Activated CD4-positive, alpha-beta T cell treated with anti-CD3 and anti-CD28 coated beads, Interleukin-2, amount 10 ng/mL, durations not matched to agents 24 days and 14 days (primary cell): ENCODE measurements at regions of chr14 and their contacts with region 1.

Region 1: GRCh38 chr14:68718023-68718995 is 74.6 kb downstream of the ZFP36L1 start:
- DNase-seq: no peak
- H3K4me3 Mint-ChIP-seq: no peak overlapping the region
- H3K27ac Mint-ChIP-seq: no peak overlapping the region
- H3K4me1 Mint-ChIP-seq: peaks cover 46% of the 10 kb centered on the region
- H3K27me3 Mint-ChIP-seq: peaks cover 2% of the 10 kb centered on the region

Region 2: GRCh38 chr14:68181519-68182326 is 536.6 kb before region 1 on chr14:
- intact Hi-C with region 1: no loop called
- DNase-seq: no peak
- H3K4me3 Mint-ChIP-seq: no peak overlapping the region
- H3K27ac Mint-ChIP-seq: peak overlapping the region; percentile 15
- H3K4me1 Mint-ChIP-seq: peaks cover 29% of the 10 kb centered on the region
- H3K27me3 Mint-ChIP-seq: peaks cover 3% of the 10 kb centered on the region

Region 3: DNA sequence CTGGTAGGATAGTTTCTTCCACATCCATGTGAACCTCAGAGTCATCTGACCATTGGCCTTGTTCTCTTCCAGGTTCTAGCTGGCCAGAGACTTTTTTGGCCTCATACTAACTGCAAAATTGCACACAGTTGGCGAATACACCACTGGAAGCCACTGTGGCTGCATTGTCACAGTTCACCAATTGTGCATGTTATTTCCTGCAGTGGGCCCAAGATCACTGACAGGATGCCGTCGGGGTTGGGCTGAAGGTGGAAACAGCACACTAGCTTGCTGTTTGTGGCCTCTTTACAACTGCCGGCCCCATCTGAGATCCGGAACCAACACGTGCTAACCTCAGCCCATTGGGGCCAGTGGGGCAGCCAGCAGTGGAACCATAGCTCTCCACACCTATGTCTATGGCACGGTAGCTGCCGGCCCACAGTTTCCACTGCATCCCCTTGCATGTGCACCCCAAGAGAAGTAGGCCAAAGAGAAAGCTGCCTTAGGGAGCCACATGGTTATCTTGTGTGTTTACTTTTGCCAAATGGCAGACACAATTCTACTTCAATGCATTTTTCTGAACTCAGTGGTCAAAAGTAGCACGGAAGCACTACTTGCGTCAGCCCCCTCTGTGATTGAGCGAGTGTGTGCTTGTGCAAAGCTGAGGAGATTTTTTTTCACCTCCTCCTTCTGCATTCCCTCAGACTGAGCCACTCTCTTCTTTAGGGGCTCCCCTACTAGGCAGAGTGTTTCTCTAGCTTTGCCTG is 434.8 kb before region 1 on chr14:
- intact Hi-C with region 1: loop called (anchors 5 kb)
- DNase-seq: peak; percentile 88
- H3K4me3 Mint-ChIP-seq: peak overlapping the region; percentile 62
- H3K27ac Mint-ChIP-seq: peak overlapping the region; percentile 83
- H3K4me1 Mint-ChIP-seq: peaks cover 57% of the 10 kb centered on the region
- H3K27me3 Mint-ChIP-seq: no peaks in the 10 kb centered on the region

Region 4: DNA sequence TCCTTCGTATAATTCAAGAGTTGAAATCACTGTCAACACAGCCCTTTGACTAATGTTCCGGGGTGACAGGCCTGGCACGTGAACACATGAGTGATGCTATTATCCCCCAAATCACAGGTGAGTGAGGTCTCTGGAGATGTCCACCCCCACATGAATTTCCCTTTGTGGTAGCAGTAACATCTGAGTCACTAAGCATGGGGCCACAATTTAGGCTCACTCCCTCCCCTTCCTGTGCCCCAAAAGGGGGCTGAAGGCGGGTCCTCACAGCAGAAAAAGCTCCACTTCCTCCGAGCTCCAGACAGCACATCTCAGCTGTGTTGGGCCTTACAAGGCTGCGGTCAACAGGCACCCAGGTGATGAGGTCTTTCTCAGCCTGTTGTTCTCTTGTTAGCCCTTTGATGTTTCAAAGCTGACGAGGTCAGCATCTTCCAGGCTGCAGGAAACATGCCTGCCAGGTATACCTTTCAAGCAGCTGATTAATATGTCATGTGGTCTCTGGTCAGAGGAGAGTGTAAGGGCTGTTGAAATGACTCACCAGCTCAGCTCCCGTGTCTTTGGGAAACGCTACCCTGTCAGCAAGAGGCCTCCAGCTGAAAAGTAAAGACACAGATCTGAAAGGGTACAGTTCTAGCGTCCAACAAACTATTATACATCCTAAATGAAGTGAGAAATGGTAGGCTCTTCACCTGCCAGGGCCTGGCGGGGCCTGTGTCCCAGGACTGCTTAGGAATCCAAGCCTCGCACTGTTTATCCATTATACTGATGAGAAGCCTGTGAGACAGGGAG is 32.7 kb before region 1 on chr14:
- intact Hi-C with region 1: loop called (anchors 2 kb)
- DNase-seq: peak; percentile 92
- H3K4me3 Mint-ChIP-seq: peak overlapping the region; percentile 61
- H3K27ac Mint-ChIP-seq: peak overlapping the region; percentile 91
- H3K4me1 Mint-ChIP-seq: peaks cover 56% of the 10 kb centered on the region
- H3K27me3 Mint-ChIP-seq: no peaks in the 10 kb centered on the region

Region 5: DNA sequence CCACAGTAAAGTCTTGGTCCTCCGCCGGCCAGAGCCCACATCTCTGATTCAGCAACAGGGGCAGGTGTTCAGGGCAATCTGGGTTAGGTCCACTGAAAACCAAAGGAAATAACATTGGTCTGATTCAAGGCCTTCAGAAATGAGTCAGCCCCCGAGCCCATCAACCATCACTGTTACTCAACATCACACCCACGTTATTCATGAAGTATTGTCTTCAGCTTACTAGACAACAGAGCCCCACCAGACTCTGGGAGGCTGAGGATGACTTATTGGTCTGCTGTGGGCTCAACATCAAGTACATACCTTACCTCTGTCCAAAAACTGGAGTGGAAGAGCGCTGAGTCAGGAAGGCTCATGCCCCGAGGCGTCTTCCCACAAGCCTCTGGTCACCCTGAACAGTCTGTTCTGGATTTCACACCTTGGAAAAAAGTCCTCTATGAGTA is 23.0 kb before region 1 on chr14:
- intact Hi-C with region 1: loop called (anchors 2 kb)
- DNase-seq: no peak
- H3K4me3 Mint-ChIP-seq: peak overlapping the region; percentile 18
- H3K27ac Mint-ChIP-seq: peak overlapping the region; percentile 72
- H3K4me1 Mint-ChIP-seq: peaks cover 20% of the 10 kb centered on the region
- H3K27me3 Mint-ChIP-seq: peaks cover 7% of the 10 kb centered on the region

Region 6: DNA sequence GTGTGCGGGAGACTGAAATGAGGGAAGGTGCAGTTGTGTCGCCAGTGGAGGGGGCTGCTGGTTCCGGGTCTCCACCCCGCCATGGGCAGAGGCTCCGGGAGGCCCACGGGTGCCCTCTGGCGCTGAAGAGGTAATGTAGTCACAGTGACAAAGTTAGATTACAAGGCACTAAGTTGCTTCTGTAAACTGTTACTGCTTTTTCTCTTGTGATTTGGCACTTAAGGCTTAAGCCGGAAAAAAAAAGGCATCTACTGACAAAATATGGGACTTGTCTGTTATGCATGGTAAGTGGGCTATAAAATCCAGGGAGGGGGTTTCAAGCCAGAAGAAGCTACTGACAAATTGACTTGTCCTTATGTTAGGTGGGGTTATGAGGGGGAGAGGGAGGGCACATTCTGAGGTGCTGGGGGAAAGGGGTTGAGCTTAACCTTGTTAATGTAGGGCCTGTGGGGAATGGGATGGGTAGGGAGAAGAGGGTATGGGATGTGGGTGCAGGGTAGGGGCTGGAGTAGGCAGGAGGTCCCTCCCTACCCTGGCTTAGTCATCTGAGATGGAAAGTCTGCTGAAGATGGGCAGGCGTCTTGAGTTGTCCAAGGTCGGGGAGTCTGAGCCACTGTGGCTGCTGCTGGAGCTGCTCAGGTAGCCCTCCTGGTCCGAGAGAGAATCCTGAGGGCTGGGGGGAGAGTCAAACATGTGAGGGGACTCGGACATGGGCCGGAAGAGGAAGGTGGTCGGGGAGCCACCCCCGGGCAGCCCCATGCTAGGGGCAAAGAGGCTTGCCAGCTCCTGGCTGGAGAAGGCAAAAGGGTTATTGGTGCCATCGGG is 70.9 kb after region 1 on chr14:
- intact Hi-C with region 1: loop called (anchors 1 kb)
- DNase-seq: peak; percentile 95
- H3K4me3 Mint-ChIP-seq: peak overlapping the region; percentile 93
- H3K27ac Mint-ChIP-seq: peak overlapping the region; percentile 100
- H3K4me1 Mint-ChIP-seq: peaks cover 68% of the 10 kb centered on the region
- H3K27me3 Mint-ChIP-seq: no peaks in the 10 kb centered on the region

Region 7: DNA sequence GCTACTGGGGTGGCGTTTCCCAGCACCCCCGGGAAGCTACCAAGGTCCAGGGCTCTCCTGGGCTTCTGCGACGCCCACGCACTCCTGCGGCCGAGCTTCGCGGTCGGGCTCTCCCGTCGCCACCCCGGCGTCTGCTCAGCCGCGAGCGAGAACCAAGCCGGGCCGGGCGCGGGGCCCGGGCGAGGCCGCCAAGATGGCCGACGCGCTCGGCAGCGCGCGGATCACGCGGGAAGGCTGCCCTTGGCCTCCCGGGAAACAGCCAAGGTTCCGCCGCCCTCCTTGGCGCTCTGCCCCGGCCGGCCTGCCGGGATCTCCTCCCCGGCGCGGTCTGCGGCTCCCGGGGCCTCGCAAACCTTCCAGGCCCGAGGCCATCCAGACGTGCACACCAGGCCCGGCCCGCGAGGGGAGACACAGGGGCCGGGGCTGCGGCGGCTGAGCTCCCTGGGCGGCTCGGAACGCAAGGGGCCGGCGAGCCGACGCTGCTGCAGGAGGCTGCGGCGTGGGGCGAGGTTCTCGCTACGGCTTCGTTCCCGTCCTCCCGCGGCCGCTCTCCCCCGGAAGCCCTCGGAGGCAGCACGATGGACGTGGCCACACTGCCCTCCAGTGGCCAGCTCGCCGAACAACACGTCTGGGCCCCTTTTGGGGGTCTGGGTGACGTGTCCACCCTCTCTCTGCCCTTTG is 98.1 kb after region 1 on chr14:
- intact Hi-C with region 1: loop called (anchors 1 kb)
- DNase-seq: peak; percentile 97
- H3K4me3 Mint-ChIP-seq: peak overlapping the region; percentile 79
- H3K27ac Mint-ChIP-seq: peak overlapping the region; percentile 90
- H3K4me1 Mint-ChIP-seq: peaks cover 56% of the 10 kb centered on the region
- H3K27me3 Mint-ChIP-seq: no peaks in the 10 kb centered on the region

Region 8: DNA sequence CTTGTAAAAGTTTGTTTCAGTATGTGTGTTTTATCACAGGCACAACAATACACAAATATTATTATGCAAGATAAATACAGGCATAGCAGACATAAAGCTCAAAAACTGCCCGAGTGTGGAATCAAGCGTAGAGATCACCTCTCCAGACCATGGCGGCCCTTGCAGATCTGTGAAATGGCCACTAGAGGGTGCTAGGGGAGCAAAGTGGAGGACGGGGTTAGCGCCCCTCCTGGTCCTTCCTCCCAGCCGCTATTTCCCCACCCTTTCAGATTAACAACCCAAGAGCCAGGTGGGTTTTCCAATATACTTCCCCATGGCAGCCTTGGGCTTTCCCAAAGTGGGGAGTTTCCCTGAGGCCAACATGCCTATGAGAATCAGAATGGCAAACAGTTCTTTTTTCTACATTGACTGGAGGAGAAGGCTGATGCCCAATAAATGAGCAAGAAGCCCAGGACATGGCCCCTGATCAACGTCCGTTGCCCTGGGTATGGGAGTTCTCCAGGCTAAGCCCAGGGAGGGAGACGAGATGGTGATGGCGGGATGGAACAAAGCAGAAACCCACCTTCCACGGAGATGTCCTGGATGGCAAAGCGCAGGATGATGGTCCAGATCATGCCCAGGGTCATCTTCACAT is 193.4 kb after region 1 on chr14:
- intact Hi-C with region 1: no loop called
- DNase-seq: peak; percentile 94
- H3K4me3 Mint-ChIP-seq: no peak overlapping the region
- H3K27ac Mint-ChIP-seq: no peak overlapping the region
- H3K4me1 Mint-ChIP-seq: peaks cover 11% of the 10 kb centered on the region
- H3K27me3 Mint-ChIP-seq: no peaks in the 10 kb centered on the region